B cell (primary cell): ENCODE measurements at regions of chr9 and their contacts with region 1.

Region 1: DNA sequence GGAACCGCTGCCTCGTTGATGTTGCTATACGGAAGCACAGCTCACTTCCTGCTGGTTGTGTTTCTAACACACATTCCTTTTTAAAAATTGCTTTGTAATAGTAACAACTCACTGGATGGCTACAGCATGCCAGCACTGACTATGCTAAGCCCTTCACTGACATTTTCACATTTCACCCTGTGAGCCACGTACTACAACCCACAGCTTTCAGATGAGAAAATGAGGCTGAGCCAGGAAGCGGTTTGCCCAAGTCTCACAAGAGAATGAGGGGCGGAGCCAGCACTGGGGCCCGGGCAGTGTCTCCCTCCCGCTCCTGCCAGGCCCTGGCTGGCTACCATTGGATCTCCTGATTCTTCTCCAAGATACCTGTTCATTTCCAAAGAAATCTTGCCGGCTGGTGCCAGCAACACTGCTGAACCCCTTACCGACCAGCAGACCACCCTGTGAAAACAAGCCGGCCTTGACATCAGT is 38.3 kb downstream of the FAM78A start:
- DNase-seq: peak; percentile 79
- ATAC-seq: peak; percentile 95
- H3K4me3 ChIP-seq: peak overlapping the region; percentile 27 to 65 (median 46)
- H3K4me3 Mint-ChIP-seq: peak overlapping the region; percentile 92
- H3K27ac ChIP-seq: peak overlapping the region; percentile 63 to 69
- H3K27ac Mint-ChIP-seq: peak overlapping the region; percentile 97
- H3K4me1 ChIP-seq: peaks cover 19 to 27% of the 10 kb centered on the region in 2 donors
- H3K4me1 Mint-ChIP-seq: peaks cover 20% of the 10 kb centered on the region
- H3K27me3 ChIP-seq: no peaks in the 10 kb centered on the region
- H3K27me3 Mint-ChIP-seq: no peaks in the 10 kb centered on the region
- CTCF ChIP-seq: no peak

Region 2: GRCh38 chr9:131270171-131271015 is 32.4 kb after region 1 on chr9:
- CTCF ChIA-PET with region 1: interaction called, 5 read pairs
- POLR2A ChIA-PET with region 1: interaction called, 16 read pairs
- intact Hi-C with region 1: no loop called
- DNase-seq: peak; percentile 69
- ATAC-seq: peak; percentile 15
- H3K4me3 ChIP-seq: peak overlapping the region; percentile 23 to 58 (median 49)
- H3K4me3 Mint-ChIP-seq: peak overlapping the region; percentile 83
- H3K27ac ChIP-seq: peak overlapping the region; percentile 86 to 91
- H3K27ac Mint-ChIP-seq: peak overlapping the region; percentile 96
- H3K4me1 ChIP-seq: peaks cover 75 to 90% of the 10 kb centered on the region in 2 donors
- H3K4me1 Mint-ChIP-seq: peaks cover 78% of the 10 kb centered on the region
- H3K27me3 ChIP-seq: no peaks in the 10 kb centered on the region
- H3K27me3 Mint-ChIP-seq: no peaks in the 10 kb centered on the region
- CTCF ChIP-seq: no peak